CD4-positive, alpha-beta memory T cell (primary cell): ENCODE measurements at regions of chr13 and their contacts with region 1.

Region 1: DNA sequence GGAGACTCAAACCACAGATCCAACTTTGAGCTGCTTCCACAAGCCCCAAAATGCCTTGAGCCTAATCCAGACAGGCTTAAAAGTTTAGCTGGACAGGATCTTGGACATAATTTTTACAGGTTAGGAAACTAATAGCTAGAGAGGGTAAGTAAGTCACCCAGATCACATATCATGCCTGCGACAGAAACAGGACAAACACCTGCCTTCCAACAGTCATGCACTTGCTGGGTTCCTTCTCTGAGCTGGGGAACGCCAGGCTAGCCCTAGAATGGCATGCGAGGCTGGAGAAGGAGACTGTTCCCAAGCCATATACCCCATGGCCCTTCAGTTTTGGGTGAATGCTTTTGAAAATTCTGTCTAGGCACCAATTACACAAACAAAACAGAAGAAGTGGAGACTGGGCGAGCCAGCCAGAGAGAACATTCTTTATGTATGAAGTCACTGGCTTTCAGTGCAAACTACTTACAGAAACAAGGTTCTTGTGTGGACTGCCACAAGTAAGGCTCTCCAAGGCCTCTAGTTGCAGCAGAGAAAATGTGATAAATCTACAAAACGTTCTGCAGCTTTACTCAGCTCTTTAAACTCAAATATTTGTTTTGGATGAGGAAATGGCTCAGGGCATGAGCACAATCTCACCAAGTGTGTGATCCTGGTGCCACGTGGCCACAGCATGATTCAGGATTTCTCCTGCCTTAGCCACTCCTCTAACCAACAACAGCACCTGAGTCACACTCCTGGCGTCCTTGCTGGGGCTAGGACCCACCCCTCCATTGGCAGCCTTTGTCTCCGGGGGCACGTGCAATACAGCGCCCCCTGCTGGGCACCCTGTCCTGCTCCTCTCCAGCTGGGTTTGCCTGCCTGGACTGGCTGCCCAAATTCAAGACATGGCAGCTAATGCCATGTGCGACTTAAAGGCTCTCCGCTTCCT is 73.4 kb upstream of the UBL3 start:
- DNase-seq: peak; percentile 16 to 64 (median 40)
- H3K4me3 ChIP-seq: no peak overlapping the region
- H3K4me3 Mint-ChIP-seq: peak overlapping the region in 2 of 8 donors; percentile 14 to 34
- H3K27ac ChIP-seq: no peak overlapping the region
- H3K27ac Mint-ChIP-seq: peak overlapping the region in 1 of 7 donors; percentile 53
- H3K4me1 ChIP-seq: peaks cover 17% of the 10 kb centered on the region
- H3K4me1 Mint-ChIP-seq: peaks cover 19 to 38% (median 28%) of the 10 kb centered on the region in 4 donors
- H3K27me3 ChIP-seq: no peaks in the 10 kb centered on the region
- H3K27me3 Mint-ChIP-seq: no peaks in the 10 kb centered on the region

Region 2: GRCh38 chr13:29771247-29771646 is 152.6 kb before region 1 on chr13:
- CTCF ChIA-PET with region 1: interaction called, 48 read pairs
- POLR2A ChIA-PET with region 1: no interaction called
- intact Hi-C with region 1: no loop called
- DNase-seq: peak in 4 of 5 donors; percentile 49 to 54 (median 52)
- H3K4me3 ChIP-seq: no peak overlapping the region
- H3K4me3 Mint-ChIP-seq: no peak overlapping the region
- H3K27ac ChIP-seq: no peak overlapping the region
- H3K27ac Mint-ChIP-seq: no peak overlapping the region
- H3K4me1 ChIP-seq: no peaks in the 10 kb centered on the region
- H3K4me1 Mint-ChIP-seq: peaks cover 0 to 4% (median 3%) of the 10 kb centered on the region in 4 donors
- H3K27me3 ChIP-seq: no peaks in the 10 kb centered on the region
- H3K27me3 Mint-ChIP-seq: no peaks in the 10 kb centered on the region

Region 3: DNA sequence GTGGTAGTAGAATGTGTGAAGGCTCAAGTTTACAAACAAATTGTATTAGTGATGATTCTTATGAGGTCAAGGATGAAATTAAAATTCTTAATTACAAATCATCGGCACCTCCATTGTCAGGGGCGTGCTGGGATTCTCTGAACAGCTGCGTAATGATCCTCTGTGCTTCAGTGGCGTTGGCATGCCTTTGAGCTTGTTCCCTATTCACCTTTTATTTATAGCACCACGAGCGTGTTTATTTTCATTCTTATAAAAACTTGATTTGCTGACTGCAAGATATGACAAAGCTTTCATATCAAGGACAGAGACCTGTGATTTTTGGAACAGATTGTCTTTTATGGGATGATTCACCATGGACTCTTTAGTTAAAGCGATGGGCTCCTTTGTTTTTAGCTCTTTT is 55.2 kb before region 1 on chr13:
- CTCF ChIA-PET with region 1: interaction called, 10 read pairs
- POLR2A ChIA-PET with region 1: no interaction called
- intact Hi-C with region 1: no loop called
- DNase-seq: no peak
- H3K4me3 ChIP-seq: no peak overlapping the region
- H3K4me3 Mint-ChIP-seq: no peak overlapping the region
- H3K27ac ChIP-seq: no peak overlapping the region
- H3K27ac Mint-ChIP-seq: no peak overlapping the region
- H3K4me1 ChIP-seq: no peaks in the 10 kb centered on the region
- H3K4me1 Mint-ChIP-seq: no peaks in the 10 kb centered on the region
- H3K27me3 ChIP-seq: no peaks in the 10 kb centered on the region
- H3K27me3 Mint-ChIP-seq: peaks cover 1 to 5% of the 10 kb centered on the region in 2 donors

Region 4: GRCh38 chr13:29892151-29892550 is 31.7 kb before region 1 on chr13:
- CTCF ChIA-PET with region 1: interaction called, 20 read pairs
- POLR2A ChIA-PET with region 1: no interaction called
- intact Hi-C with region 1: no loop called
- DNase-seq: no peak
- H3K4me3 ChIP-seq: no peak overlapping the region
- H3K4me3 Mint-ChIP-seq: no peak overlapping the region
- H3K27ac ChIP-seq: no peak overlapping the region
- H3K27ac Mint-ChIP-seq: no peak overlapping the region
- H3K4me1 ChIP-seq: no peaks in the 10 kb centered on the region
- H3K4me1 Mint-ChIP-seq: peaks cover 0 to 6% (median 2%) of the 10 kb centered on the region in 4 donors
- H3K27me3 ChIP-seq: no peaks in the 10 kb centered on the region
- H3K27me3 Mint-ChIP-seq: no peaks in the 10 kb centered on the region

Region 5: DNA sequence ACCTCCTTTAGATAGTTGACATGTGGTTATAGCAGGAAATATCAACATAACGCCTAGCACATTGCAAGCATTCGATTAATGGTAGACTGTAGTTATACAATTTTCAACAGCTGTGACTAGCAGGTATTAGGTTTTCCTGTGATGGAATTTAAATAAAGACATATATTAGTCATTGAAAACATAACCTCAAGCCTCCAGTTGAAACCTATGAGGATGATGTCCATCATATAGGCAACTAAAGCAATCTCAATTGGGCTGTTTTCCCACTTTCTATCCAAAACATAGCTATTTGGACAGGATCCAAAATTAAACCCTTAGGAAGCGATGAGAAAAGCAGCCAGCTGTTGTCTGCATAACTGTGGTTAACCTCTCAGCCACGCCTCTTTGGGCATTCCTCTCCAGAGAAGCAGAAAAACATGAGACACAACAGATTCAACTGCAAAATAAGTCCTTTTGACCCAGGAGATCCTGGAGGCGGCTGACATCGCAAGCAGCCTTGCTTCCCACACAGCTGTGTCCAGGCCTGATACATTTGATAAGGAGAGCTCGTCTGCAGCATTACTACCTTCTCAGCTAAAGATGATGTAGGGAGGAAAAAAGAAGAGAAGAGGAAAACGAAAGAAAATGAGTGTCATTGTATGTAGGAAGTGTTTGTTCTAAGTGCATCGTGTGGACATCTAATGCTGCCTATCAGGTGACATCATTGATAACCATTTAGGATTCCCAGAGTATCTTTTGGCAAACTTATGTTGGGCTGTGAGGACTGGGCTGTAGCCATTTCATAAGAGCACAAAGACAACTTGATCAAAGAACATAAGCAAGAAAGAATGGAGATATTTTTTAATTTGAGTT is 21.5 kb before region 1 on chr13:
- CTCF ChIA-PET with region 1: interaction called, 34 read pairs
- POLR2A ChIA-PET with region 1: interaction called, 4 read pairs
- intact Hi-C with region 1: no loop called
- DNase-seq: peak; percentile 49 to 56 (median 51)
- H3K4me3 ChIP-seq: peak overlapping the region; percentile 7 to 36
- H3K4me3 Mint-ChIP-seq: peak overlapping the region; percentile 86 to 97 (median 92)
- H3K27ac ChIP-seq: peak overlapping the region; percentile 32
- H3K27ac Mint-ChIP-seq: peak overlapping the region; percentile 73 to 97 (median 95)
- H3K4me1 ChIP-seq: peaks cover 28% of the 10 kb centered on the region
- H3K4me1 Mint-ChIP-seq: peaks cover 16 to 29% (median 25%) of the 10 kb centered on the region in 4 donors
- H3K27me3 ChIP-seq: no peaks in the 10 kb centered on the region
- H3K27me3 Mint-ChIP-seq: peaks cover 0 to 1% of the 10 kb centered on the region in 2 donors

Region 6: DNA sequence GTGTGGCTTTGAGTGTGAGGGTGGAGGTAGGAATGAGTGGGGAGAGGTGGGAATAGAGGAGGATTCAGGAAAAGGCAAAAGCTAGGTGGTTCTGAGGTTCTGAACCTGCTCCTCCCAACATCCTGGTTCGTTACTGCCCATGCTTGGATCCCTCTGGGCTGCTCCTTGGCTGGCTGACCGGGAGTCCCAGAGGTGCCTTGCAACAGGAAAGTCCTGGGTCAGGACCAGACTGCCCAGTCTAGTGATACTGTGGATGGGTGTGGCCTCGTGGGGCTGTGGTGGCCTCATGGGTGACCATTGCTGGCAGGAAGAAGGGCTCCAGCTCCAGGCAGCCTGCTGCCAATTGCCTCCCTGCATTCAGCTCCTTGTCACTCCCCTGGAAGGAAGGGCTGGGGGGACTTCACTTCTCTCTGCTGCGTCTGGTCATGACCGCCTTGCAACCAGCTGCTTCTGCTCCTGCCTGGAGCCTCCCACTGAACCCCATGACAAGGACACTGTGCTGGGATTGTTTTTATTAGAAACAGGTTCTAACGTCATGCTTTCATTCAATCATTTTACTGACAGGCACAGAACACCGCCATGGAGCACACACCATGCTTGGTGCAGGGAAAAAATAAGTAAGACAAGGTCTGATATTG is 11.9 kb before region 1 on chr13:
- CTCF ChIA-PET with region 1: interaction called, 21 read pairs
- POLR2A ChIA-PET with region 1: interaction called, 3 read pairs
- intact Hi-C with region 1: no loop called
- DNase-seq: no peak
- H3K4me3 ChIP-seq: no peak overlapping the region
- H3K4me3 Mint-ChIP-seq: no peak overlapping the region
- H3K27ac ChIP-seq: no peak overlapping the region
- H3K27ac Mint-ChIP-seq: no peak overlapping the region
- H3K4me1 ChIP-seq: no peaks in the 10 kb centered on the region
- H3K4me1 Mint-ChIP-seq: no peaks in the 10 kb centered on the region
- H3K27me3 ChIP-seq: no peaks in the 10 kb centered on the region
- H3K27me3 Mint-ChIP-seq: no peaks in the 10 kb centered on the region

Region 7: GRCh38 chr13:29954082-29955028 is 30.5 kb after region 1 on chr13:
- CTCF ChIA-PET with region 1: interaction called, 15 read pairs
- POLR2A ChIA-PET with region 1: no interaction called
- intact Hi-C with region 1: no loop called
- DNase-seq: peak; percentile 46 to 81 (median 68)
- H3K4me3 ChIP-seq: peak overlapping the region; percentile 35 to 47
- H3K4me3 Mint-ChIP-seq: peak overlapping the region; percentile 80 to 98 (median 88)
- H3K27ac ChIP-seq: peak overlapping the region; percentile 49
- H3K27ac Mint-ChIP-seq: peak overlapping the region; percentile 77 to 96 (median 90)
- H3K4me1 ChIP-seq: peaks cover 53% of the 10 kb centered on the region
- H3K4me1 Mint-ChIP-seq: peaks cover 29 to 58% (median 44%) of the 10 kb centered on the region in 4 donors
- H3K27me3 ChIP-seq: no peaks in the 10 kb centered on the region
- H3K27me3 Mint-ChIP-seq: no peaks in the 10 kb centered on the region